ENCODE measurements at regions of chr19 and their contacts with region 1.

Region 1: DNA sequence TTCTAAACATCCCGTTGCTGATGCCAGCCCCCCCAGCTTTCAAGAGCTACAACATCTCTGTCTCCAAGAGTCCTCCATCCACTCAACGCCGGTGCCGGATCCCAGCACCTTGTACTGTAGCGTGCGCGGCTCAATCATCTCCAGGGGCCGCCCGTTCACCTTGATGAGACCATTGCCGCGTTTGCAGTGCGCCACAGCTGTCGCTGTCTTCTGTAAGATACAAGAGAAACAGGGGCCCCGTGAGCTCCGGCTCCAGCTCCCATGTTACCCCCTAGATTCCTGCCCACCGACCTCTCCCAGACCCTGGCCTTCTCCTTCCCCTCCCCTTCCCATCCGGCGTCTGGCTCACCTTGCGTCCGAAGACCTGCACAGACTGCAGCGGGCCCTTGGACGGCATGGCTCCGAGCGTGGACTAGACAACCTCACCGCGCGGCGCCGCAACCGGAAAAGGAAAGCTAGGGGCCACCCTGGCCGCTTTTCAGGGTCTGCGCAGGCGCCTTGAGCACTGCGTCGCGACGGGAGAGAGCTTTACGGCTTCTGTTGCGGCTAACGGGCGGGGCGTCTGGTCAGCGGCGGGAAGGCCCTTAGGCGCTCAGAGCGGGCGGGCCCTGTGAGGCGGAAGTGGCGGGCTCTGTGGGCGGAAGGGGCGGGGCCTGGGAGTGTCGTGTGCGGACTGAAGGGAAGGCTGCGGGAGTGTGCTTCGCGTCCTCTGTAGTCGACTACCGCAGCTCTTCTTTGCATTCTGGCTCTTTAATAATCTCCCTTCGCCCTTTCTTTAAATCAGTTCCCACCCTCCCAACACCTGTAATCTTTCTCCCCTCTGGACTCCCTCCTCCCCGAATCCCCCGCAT is at the start of gene RPS16:
- DNase-seq: peak; percentile 99
- H3K4me3 ChIP-seq: peak within 1 kb of the TSS; percentile 63
- H3K4me3 Mint-ChIP-seq: peak within 1 kb of the TSS; percentile 87
- H3K27ac Mint-ChIP-seq: peak within 1 kb of the TSS; percentile 93
- H3K4me1 ChIP-seq: peaks cover 23% of the 10 kb centered on the region
- H3K4me1 Mint-ChIP-seq: peaks cover 23% of the 10 kb centered on the region
- H3K27me3 ChIP-seq: no peaks in the 10 kb centered on the region
- H3K27me3 Mint-ChIP-seq: no peaks in the 10 kb centered on the region
- CTCF ChIP-seq: no peak
- total RNA-seq, gene RPS16: 2,801 and 3,019 TPM in 2 replicates

Region 2: GRCh38 chr19:38964738-38965137 is 471.0 kb before region 1 on chr19:
- CTCF ChIA-PET with region 1: no interaction called
- POLR2A ChIA-PET with region 1: no interaction called
- intact Hi-C with region 1: no loop called
- DNase-seq: no peak
- H3K4me3 ChIP-seq: no peak overlapping the region
- H3K4me3 Mint-ChIP-seq: no peak overlapping the region
- H3K27ac Mint-ChIP-seq: no peak overlapping the region
- H3K4me1 ChIP-seq: no peaks in the 10 kb centered on the region; the same call in 1 of the 2 replicates
- H3K4me1 Mint-ChIP-seq: peaks cover 11% of the 10 kb centered on the region
- H3K27me3 ChIP-seq: no peaks in the 10 kb centered on the region
- H3K27me3 Mint-ChIP-seq: no peaks in the 10 kb centered on the region
- CTCF ChIP-seq: no peak

Region 3: GRCh38 chr19:39390755-39391592 is 44.8 kb before region 1 on chr19 and contains the starts of genes MED29 and PAF1:
- CTCF ChIA-PET with region 1: interaction called, 3 read pairs
- POLR2A ChIA-PET with region 1: interaction called, 54 read pairs
- intact Hi-C with region 1: no loop called
- DNase-seq: peak; percentile 98 to 99
- H3K4me3 ChIP-seq: peak within 1 kb of the TSS; percentile 76
- H3K4me3 Mint-ChIP-seq: peak within 1 kb of the TSS; percentile 99
- H3K27ac Mint-ChIP-seq: peak within 1 kb of the TSS; percentile 92
- H3K4me1 ChIP-seq: peaks cover 10% of the 10 kb centered on the region
- H3K4me1 Mint-ChIP-seq: peaks cover 33% of the 10 kb centered on the region
- H3K27me3 ChIP-seq: no peaks in the 10 kb centered on the region
- H3K27me3 Mint-ChIP-seq: no peaks in the 10 kb centered on the region
- CTCF ChIP-seq: peak in 1 of 2 experiments; percentile 46
- total RNA-seq, gene MED29: 50.3 and 50.8 TPM in 2 replicates
- total RNA-seq, gene PAF1: 57.9 and 59.0 TPM in 2 replicates

Region 4: DNA sequence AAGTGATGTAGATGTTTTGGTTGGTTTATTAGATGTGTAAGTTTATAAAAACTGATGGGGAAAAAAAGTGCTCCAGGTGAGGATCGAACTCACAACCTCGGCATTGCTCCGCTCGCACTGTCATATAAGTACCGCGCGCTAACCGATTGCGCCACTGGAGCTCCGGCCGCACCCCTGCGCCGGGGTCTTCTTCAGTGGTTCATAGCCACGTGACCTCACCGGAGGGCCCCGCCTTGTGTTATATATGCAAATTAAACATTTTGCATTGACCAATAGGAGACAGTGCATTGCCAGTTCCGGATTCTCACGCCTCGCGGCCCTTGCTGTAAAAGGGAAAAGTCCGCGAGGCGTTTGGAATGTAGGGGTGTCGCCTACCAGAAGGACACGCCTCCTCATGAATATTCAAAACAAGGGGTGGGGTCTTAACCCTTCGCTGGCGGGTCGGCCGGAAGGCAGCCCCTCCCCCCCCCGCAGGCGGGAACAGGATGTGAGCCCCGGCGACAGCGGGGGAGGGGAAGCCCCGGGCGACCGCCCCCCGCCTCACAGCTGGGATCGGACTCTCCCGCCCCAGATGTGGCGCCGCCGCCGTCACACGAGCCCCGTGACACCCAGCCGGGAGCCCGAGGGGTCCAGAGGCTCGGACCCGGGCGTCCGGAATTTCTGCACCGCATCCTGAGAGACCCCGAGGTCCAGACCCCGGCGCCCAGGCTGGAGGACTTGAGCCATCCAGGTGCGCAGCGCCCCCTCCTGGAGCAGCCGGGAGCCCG is 23.4 kb before region 1 on chr19 and contains the start of gene PLEKHG2:
- CTCF ChIA-PET with region 1: interaction called, 22 read pairs
- POLR2A ChIA-PET with region 1: interaction called, 25 read pairs
- intact Hi-C with region 1: loop called (anchors 1 kb)
- DNase-seq: peak; percentile 99
- H3K4me3 ChIP-seq: peak within 1 kb of the TSS; percentile 88
- H3K4me3 Mint-ChIP-seq: peak within 1 kb of the TSS; percentile 77
- H3K27ac Mint-ChIP-seq: peak within 1 kb of the TSS; percentile 90
- H3K4me1 ChIP-seq: peaks cover 30% of the 10 kb centered on the region
- H3K4me1 Mint-ChIP-seq: peaks cover 40% of the 10 kb centered on the region
- H3K27me3 ChIP-seq: no peaks in the 10 kb centered on the region
- H3K27me3 Mint-ChIP-seq: peaks cover 3% of the 10 kb centered on the region
- CTCF ChIP-seq: peak; percentile 91 to 92
- total RNA-seq, gene PLEKHG2: 49.8 and 64.1 TPM in 2 replicates

Region 5: DNA sequence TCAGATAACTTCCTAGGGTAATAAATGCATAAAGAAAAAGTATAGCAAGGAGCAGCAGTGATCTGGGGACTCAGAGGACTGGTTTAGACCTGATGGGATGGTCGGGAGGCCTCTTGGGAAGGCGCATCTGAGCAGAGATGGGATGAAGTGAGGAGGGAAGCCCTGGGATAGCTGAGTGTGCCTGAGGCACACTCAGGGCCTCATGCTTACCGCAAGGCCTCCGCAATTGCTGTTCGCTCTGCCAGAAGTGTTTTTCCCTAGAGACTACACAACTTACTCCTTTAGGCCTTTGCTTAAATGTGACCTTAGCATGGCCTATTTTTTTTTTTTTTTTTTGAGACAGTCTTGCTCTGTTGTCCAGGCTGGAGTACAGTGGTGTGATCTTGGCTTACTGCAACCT is 58.9 kb after region 1 on chr19:
- CTCF ChIA-PET with region 1: interaction called, 20 read pairs
- POLR2A ChIA-PET with region 1: interaction called, 13 read pairs
- intact Hi-C with region 1: no loop called
- DNase-seq: no peak
- H3K4me3 ChIP-seq: no peak overlapping the region
- H3K4me3 Mint-ChIP-seq: no peak overlapping the region
- H3K27ac Mint-ChIP-seq: no peak overlapping the region
- H3K4me1 ChIP-seq: 0 out of 2 replicates have a peak, but pooled peaks cover 7% of the 10 kb centered on the region
- H3K4me1 Mint-ChIP-seq: peaks cover 13% of the 10 kb centered on the region
- H3K27me3 ChIP-seq: no peaks in the 10 kb centered on the region; the same call in 1 of the 2 replicates
- H3K27me3 Mint-ChIP-seq: peaks cover 9% of the 10 kb centered on the region
- CTCF ChIP-seq: no peak

Region 6: GRCh38 chr19:39539519-39540332 is 104.0 kb after region 1 on chr19 and contains the start of gene EID2:
- CTCF ChIA-PET with region 1: interaction called, 10 read pairs
- POLR2A ChIA-PET with region 1: interaction called, 11 read pairs
- intact Hi-C with region 1: loop called (anchors 2 kb)
- DNase-seq: peak; percentile 95 to 97
- H3K4me3 ChIP-seq: peak within 1 kb of the TSS; percentile 82
- H3K4me3 Mint-ChIP-seq: peak within 1 kb of the TSS; percentile 90
- H3K27ac Mint-ChIP-seq: peak within 1 kb of the TSS; percentile 93
- H3K4me1 ChIP-seq: peaks cover 8% of the 10 kb centered on the region; the same call in 1 of the 2 replicates
- H3K4me1 Mint-ChIP-seq: peaks cover 15% of the 10 kb centered on the region
- H3K27me3 ChIP-seq: no peaks in the 10 kb centered on the region
- H3K27me3 Mint-ChIP-seq: peaks cover 4% of the 10 kb centered on the region
- CTCF ChIP-seq: peak; percentile 89
- total RNA-seq, gene EID2: 21.7 and 26.3 TPM in 2 replicates

Measured in Caco-2 (cell line).